ENCODE measurements at regions of chr11 and their contacts with region 1.

Region 1: DNA sequence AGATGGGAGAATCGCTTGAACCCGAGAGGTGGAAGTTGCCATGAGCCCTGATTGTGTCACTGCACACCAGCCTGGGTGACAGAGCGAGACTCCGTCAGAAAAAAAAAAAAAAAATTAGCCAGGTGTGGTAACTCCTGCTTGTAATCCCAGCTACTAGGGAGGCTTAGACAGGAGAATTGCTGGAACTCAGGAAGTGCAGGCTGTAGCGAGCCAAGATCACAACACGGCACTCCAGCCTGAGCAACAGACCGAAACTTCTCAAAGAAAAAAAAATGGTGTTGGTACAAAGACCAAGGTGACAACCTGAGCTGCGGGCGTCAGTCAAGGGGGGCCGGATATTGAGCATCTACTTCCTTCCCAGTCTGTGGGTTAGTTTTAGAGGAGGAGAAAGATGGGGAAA is 48.4 kb upstream of the HSPA8 start:
- DNase-seq: no peak
- ATAC-seq: peak in 2 of 8 donors; percentile 25 to 55
- H3K4me3 ChIP-seq: no peak overlapping the region
- H3K27ac ChIP-seq: no peak overlapping the region
- H3K4me1 ChIP-seq: peaks cover 0 to 7% (median 0%) of the 10 kb centered on the region in 9 donors
- H3K27me3 ChIP-seq: peaks cover 0 to 13% (median 3%) of the 10 kb centered on the region in 7 donors
- CTCF ChIP-seq: no peak

Region 2: DNA sequence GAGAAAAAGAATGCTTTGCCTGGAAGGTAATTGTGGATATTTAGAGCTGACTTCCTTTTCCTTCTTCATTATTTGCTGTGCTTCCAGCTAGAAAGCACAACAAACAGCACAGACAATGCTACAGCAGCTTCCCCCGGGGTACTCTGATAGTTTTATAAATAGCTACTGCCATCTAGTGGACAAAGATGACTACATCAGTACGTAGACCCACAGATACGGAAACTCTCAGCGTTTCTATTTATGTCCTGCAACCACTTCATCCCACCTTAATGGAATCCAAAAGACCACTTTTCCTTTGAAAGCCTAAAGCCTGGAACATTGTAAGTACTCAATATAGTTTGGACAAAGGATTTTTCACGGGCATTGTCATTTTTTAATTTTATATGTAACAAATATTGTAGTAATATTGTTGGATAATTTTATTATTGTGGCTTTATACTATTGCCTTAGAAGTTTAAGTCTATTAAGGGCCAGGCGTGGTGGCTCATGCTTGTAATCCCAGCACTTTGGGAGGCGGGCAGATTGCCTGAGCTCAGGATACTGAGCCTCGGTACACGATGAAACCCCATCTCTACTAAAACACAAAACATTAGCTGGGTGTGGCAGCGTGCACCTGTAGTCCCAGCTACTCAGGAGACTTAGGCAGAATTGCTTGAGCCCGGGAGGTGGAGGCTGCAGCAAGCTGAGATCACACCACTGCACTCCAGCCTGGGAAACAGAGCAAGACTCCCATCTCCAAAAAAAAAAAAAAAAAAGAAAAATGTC is 55.9 kb before region 1 on chr11:
- intact Hi-C with region 1: no loop called
- DNase-seq: peak in 1 of 2 donors; percentile 40
- ATAC-seq: peak; percentile 71 to 93 (median 88)
- H3K4me3 ChIP-seq: no peak overlapping the region
- H3K27ac ChIP-seq: peak overlapping the region in 1 of 10 donors; percentile 3
- H3K4me1 ChIP-seq: peaks cover 23 to 59% (median 48%) of the 10 kb centered on the region in 9 donors
- H3K27me3 ChIP-seq: no peaks in the 10 kb centered on the region
- CTCF ChIP-seq: peak; percentile 58 to 82 (median 75)

Region 3: GRCh38 chr11:123246749-123247495 is 136.6 kb after region 1 on chr11:
- intact Hi-C with region 1: loop called (anchors 1 to 5 kb)
- DNase-seq: peak; percentile 78 to 79
- ATAC-seq: peak; percentile 68 to 86 (median 80)
- H3K4me3 ChIP-seq: peak overlapping the region in 1 of 10 donors; percentile 5
- H3K27ac ChIP-seq: no peak overlapping the region
- H3K4me1 ChIP-seq: peaks cover 0 to 13% (median 4%) of the 10 kb centered on the region in 9 donors
- H3K27me3 ChIP-seq: peaks cover 0 to 14% (median 6%) of the 10 kb centered on the region in 7 donors
- CTCF ChIP-seq: peak; percentile 96 to 99 (median 98)

Region 4: DNA sequence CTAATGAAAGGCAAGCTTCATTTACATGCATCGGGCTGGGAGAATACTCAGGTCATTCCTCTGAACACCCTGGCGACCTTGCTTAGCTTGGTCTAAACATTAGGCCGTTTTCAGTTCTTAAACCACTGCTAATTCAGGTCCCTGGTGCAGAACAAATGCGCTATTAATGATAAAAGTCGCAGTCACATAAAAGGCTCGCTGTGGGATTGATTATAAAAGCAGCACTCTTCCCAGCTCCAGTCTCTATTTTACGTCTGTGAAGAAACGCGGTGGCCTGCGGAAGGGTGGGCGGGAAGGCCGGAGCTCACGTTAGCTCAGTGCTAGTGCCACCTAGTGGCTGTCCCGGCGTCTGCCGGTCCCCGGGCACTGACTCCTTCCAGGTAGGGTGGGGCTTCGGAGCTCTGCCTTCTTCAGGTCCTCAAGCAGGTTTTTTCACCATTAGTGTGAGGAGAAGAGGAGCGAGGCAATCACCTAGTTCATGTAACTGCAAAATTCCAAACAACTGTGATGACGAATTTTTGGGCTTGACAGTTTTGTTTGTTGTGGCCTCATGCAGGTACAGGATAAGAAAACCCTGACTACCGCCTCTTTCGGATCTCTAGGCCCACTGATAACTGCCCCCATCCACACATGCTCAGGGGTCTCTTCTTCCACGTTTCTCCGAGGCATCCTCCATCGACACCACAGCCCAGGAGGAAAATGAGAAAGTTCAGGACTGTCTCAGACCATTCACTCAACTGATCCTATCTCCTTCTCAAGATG is 151.2 kb after region 1 on chr11:
- intact Hi-C with region 1: loop called in 2 of 10 experiments (anchors 5 kb)
- DNase-seq: peak; percentile 78 to 85
- ATAC-seq: peak; percentile 85 to 95 (median 90)
- H3K4me3 ChIP-seq: peak overlapping the region in 6 of 10 donors; percentile 10 to 44 (median 30)
- H3K27ac ChIP-seq: no peak overlapping the region
- H3K4me1 ChIP-seq: peaks cover 0 to 15% (median 5%) of the 10 kb centered on the region in 9 donors
- H3K27me3 ChIP-seq: peaks cover 0 to 44% (median 20%) of the 10 kb centered on the region in 7 donors
- CTCF ChIP-seq: peak; percentile 89 to 97 (median 94)

Region 5: GRCh38 chr11:123286761-123287160 is 176.4 kb after region 1 on chr11:
- intact Hi-C with region 1: no loop called
- DNase-seq: no peak
- ATAC-seq: no peak
- H3K4me3 ChIP-seq: no peak overlapping the region
- H3K27ac ChIP-seq: no peak overlapping the region
- H3K4me1 ChIP-seq: no peaks in the 10 kb centered on the region
- H3K27me3 ChIP-seq: peaks cover 0 to 21% (median 5%) of the 10 kb centered on the region in 7 donors
- CTCF ChIP-seq: no peak

Region 6: DNA sequence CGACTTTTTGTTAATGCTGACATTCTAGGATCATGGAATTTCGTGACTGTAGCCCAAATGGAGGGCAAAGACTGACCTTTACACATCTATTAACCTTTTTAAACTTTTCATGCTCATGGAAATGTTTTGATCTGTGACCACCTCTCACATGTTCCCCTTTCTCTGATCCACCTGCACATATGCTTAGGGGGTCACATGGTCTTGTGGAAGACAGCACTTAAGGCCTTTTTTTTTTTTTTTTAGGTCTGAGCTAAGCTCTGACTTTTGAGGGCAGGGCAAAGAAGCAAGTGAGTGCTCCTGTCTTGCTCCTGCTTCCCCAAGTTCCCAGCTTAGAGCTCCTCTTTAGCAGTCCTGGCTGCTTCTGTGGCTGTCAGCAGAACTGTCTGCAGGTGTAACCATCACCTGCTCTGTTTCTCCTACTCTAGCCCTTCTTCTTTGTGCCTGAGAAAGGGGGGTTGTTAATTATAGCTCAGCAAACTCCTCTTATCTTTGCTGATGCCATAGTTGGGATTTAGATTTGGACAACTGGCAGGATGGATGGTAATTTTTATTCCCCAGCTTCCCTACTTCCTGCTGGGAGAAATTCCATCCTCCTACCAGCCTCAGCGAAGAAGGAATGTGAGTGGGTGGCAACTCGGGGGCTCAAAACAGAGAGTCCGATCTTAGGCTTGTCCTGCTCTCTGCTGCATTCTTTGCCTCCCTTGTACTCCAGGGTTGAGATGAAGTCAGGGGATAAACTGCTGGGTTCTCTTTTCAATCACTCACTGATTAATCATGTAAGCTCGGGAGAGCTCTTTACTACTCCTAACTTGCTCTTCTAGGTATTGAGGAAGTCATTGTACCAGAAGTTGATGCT is 384.1 kb after region 1 on chr11:
- intact Hi-C with region 1: loop called in 1 of 10 experiments (anchors 10 kb)
- DNase-seq: no peak
- ATAC-seq: peak in 2 of 8 donors; percentile 28 to 38
- H3K4me3 ChIP-seq: no peak overlapping the region
- H3K27ac ChIP-seq: no peak overlapping the region
- H3K4me1 ChIP-seq: peaks cover 0 to 19% (median 6%) of the 10 kb centered on the region in 9 donors
- H3K27me3 ChIP-seq: no peaks in the 10 kb centered on the region
- CTCF ChIP-seq: no peak